Posterior cingulate gyrus (tissue), 11 donors: ENCODE measurements at regions of chr4 and their contacts with region 1.

Region 1: DNA sequence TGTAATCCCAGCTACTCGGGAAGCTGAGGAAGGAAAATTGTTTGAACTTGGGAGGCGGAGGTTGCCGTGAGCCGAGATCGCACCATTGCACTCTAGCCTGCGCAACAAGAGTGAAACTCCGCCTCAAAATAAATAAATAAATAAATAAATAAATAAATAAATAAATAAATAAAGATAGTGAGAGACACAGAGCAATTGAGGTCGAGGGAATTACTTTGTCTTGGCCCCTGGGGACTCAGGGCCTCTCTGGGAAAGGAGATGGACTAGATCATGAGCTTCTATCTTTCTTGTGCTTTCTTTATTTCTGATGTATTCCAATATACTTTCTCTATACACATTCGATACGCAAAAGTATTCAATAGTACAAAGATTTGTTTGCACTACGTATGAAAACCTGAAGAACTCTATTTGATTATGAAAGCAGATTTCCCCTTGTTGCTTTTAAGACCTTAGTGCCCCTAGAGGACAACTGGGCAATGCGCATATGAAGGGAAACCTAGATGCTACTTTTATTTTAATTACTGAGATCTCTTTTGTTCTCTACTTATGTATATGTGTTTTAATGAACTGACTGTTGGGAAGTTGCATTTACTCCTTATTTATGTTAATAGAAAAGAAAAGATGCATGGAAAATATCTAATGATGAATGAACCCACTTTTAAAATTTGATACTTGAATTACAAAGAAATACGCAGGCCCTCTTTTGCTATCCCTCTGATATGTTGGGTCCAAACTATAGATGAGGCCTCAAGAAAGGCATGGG is 12.8 kb upstream of the ELOVL6 start:
- DNase-seq: peak in 1 of 10 donors; percentile 14

Region 2: DNA sequence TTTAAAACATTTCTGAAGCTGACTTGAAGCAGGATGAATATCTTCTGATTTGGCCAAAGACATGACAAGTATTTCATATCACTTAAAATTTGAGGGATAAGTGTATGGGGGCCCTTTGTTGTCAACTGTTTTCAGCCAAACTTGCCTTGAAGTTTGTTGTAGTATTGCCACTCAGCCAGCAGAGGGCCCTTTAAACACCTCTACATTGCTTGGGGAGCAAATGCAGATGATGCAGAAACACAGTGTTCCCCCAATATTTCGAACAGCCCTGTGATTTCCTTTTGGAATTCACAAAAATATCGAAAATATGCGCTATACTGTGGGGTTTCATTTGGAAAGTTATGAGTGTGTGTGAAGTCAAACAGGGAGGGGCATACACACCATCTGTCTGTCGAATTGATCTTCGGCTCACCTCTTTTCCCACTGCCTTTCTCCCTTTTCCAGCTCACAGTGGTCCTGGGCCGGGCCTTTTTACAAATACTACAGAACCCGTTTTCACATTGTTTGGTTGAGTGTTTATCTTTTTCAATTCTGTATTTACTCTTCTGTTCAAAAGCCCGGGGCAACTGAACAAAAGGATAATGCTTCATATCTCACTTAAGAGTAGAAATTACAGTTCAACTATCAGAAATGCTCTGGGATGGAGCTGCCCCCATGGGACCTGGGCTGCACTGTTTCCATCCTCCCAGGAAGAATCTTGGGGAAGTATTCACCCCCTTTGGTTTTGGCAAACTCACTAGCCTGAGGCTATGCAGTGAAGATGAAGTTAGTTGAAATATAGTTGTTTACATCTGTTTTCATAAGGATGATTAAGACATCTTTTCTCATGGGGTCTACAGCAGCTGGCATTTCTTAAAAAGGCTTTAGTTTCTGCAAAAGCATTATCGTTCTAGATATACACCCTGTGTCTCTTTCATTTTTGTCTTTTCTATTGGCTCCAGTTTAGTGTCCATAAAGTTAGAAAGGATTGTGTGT is 160.9 kb before region 1 on chr4:
- intact Hi-C with region 1: loop called (anchors 1 kb)
- DNase-seq: peak in 6 of 10 donors; percentile 25 to 87 (median 63)

Region 3: GRCh38 chr4:110364911-110365520 is 153.8 kb after region 1 on chr4:
- intact Hi-C with region 1: no loop called
- DNase-seq: no peak

Region 4: DNA sequence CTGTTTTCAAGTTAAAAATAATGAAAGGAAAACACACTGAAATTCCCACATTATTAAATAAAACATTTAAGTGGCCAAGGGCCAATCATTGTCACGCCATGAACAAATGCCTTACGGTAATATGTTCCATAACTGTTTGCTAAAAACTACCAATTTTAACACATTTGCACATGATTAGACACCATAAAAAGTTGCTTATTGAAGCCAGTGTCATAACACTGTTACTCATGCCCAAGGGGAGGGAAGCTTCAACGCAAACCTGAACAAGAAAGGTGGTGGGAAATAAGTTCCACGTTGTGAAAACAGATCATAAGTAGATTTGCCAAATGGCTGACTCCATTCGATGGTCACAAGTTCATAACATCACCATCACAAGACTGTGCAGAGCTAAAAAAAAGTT is 1194.8 kb after region 1 on chr4:
- intact Hi-C with region 1: no loop called
- DNase-seq: no peak